Transverse colon (tissue), 4 donors: ENCODE measurements at regions of chr16 and their contacts with region 1.

Region 1: DNA sequence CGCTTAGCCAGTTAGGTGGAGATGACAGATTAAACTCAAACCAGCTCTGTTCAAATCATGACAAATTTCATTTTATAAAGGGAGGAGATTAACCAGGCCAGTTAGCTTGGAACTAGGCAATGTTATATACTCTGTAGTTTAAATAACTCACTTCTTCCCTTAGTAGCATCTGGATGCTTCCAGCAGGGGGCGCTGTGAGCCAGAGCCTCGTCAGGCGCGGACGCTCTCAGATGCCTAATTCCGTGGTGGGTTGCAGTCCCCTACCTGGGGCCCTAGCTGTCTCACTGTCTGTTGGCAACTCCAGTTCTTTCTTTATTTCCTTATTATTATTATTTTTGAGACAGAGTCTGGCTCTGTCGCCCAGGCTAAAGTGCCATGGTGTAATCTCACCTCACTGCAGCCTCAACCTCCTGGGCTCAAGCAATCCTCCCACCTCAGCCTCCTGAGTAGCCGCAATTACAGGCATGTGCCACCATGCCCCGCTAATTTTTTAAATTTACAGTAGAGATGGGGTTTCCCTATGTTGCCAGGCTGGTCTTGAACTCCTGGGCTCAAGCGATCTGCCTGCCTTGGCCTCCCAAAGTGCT is 17.3 kb upstream of the WFDC1 start:
- DNase-seq: peak; percentile 76
- H3K4me3 ChIP-seq: no peak overlapping the region
- H3K27ac ChIP-seq: no peak overlapping the region
- H3K4me1 ChIP-seq: no peaks in the 10 kb centered on the region
- H3K27me3 ChIP-seq: no peaks in the 10 kb centered on the region
- CTCF ChIP-seq: peak; percentile 85 to 93 (median 91)
- EP300 ChIP-seq: no peak
- POLR2A ChIP-seq: no peak

Region 2: GRCh38 chr16:84228321-84228838 is 49.0 kb before region 1 on chr16:
- in situ Hi-C with region 1: no loop called
- intact Hi-C with region 1: no loop called
- DNase-seq: peak; percentile 15
- H3K4me3 ChIP-seq: no peak overlapping the region
- H3K27ac ChIP-seq: no peak overlapping the region
- H3K4me1 ChIP-seq: peaks cover 0 to 11% (median 3%) of the 10 kb centered on the region in 4 donors
- H3K27me3 ChIP-seq: no peaks in the 10 kb centered on the region
- CTCF ChIP-seq: no peak
- EP300 ChIP-seq: no peak
- POLR2A ChIP-seq: no peak

Region 3: DNA sequence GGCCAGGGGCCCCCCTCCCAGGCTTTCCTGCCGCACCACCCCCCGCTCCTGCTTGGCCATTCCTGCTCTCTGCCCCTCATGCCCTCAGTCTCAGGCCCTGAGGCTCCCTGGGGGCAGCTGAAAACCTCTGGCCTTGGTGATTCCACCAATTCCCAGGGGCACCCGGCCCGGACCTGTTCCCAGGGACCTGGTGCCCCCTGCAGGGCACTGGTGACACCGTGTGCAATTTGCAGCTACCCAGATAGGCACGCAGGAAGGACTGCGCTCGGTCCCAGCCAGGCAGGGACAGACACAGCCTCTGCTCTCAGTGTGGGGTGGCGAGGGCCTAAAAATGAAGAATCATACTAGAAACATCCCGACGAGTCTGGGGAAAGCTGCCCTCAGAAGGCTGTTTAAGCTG is 30.8 kb after region 1 on chr16:
- in situ Hi-C with region 1: no loop called
- intact Hi-C with region 1: loop called (anchors 2 kb)
- DNase-seq: peak; percentile 66
- H3K4me3 ChIP-seq: no peak overlapping the region
- H3K27ac ChIP-seq: peak overlapping the region in 2 of 4 donors; percentile 17 to 27
- H3K4me1 ChIP-seq: peaks cover 0 to 22% (median 4%) of the 10 kb centered on the region in 4 donors
- H3K27me3 ChIP-seq: no peaks in the 10 kb centered on the region
- CTCF ChIP-seq: peak; percentile 61 to 73 (median 63)
- EP300 ChIP-seq: no peak
- POLR2A ChIP-seq: no peak

Region 4: GRCh38 chr16:84478172-84478947 is 201.0 kb after region 1 on chr16:
- in situ Hi-C with region 1: loop called in 3 of 4 experiments (anchors 10 kb)
- intact Hi-C with region 1: loop called (anchors 10 kb)
- DNase-seq: no peak
- H3K4me3 ChIP-seq: no peak overlapping the region
- H3K27ac ChIP-seq: no peak overlapping the region
- H3K4me1 ChIP-seq: no peaks in the 10 kb centered on the region
- H3K27me3 ChIP-seq: no peaks in the 10 kb centered on the region
- CTCF ChIP-seq: no peak
- EP300 ChIP-seq: no peak
- POLR2A ChIP-seq: no peak